Sciatic nerve (tissue), 2 donors: ENCODE measurements at regions of chr14 and their contacts with region 1.

Region 1: GRCh38 chr14:58878439-58879139 is 240.8 kb downstream of the DACT1 start:
- DNase-seq: no peak
- ATAC-seq: no peak

Region 2: GRCh38 chr14:58898655-58899316 is 20.2 kb after region 1 on chr14:
- intact Hi-C with region 1: loop called (anchors 1 kb)
- DNase-seq: no peak
- ATAC-seq: no peak

Region 3: DNA sequence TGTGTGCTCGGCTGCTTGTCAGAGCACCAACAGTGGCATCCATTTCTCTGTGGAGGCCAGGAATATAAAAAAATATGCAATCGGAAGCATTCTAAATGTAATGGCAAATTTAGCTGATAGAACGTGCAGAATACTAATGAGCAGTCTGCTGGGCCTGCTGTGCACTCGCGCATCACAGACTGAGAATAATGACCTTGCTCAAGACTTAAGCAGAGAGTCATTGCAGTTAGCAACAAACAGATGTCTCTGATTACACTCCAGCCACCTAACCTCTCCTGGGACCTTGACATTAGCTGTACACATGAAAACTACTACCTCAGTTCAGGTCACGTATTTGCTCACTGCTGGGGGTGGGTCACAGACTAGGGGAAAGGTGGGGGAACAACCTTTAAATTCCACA is 40.6 kb after region 1 on chr14:
- intact Hi-C with region 1: no loop called
- DNase-seq: no peak
- ATAC-seq: no peak